ENCODE measurements at regions of chr22 and their contacts with region 1.

Region 1: GRCh38 chr22:49948958-49949913 is 11.3 kb upstream of the PIM3 start:
- DNase-seq: no peak
- ATAC-seq: no peak
- H3K4me3 ChIP-seq: no peak overlapping the region
- H3K4me3 Mint-ChIP-seq: no peak overlapping the region
- H3K27ac ChIP-seq: no peak overlapping the region
- H3K27ac Mint-ChIP-seq: peak overlapping the region in 1 of 9 donors; percentile 55
- H3K4me1 ChIP-seq: peaks cover 9 to 18% of the 10 kb centered on the region in 2 donors
- H3K4me1 Mint-ChIP-seq: peaks cover 5 to 18% (median 9%) of the 10 kb centered on the region in 7 donors
- H3K27me3 ChIP-seq: no peaks in the 10 kb centered on the region
- H3K27me3 Mint-ChIP-seq: no peaks in the 10 kb centered on the region

Region 2: DNA sequence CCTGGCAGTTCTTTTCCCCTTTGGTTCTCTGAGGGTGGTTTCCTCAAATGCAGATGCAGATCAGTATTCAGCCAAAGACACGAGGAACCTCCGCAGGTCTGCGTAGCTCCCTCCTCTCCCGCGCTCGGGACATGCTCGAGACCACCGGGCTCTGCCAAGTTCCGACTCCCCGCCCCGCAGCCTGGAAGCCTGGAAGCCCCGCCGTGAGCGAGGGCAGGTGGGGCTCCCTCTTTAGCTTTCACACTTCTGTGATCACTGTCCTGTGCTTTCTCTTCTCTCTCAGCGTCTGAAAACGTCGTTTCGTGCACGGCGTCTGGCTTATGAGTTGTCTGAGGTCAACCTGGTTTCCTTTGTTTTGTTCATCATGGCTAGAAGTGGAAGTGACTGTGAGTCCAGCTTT is 69.0 kb before region 1 on chr22:
- CTCF ChIA-PET with region 1: no interaction called
- POLR2A ChIA-PET with region 1: no interaction called
- intact Hi-C with region 1: no loop called
- DNase-seq: no peak
- ATAC-seq: peak; percentile 53
- H3K4me3 ChIP-seq: no peak overlapping the region
- H3K4me3 Mint-ChIP-seq: peak overlapping the region in 5 of 10 donors; percentile 7 to 61 (median 16)
- H3K27ac ChIP-seq: no peak overlapping the region
- H3K27ac Mint-ChIP-seq: peak overlapping the region in 7 of 9 donors; percentile 25 to 83 (median 57)
- H3K4me1 ChIP-seq: peaks cover 3 to 9% of the 10 kb centered on the region in 2 donors
- H3K4me1 Mint-ChIP-seq: peaks cover 23 to 57% (median 37%) of the 10 kb centered on the region in 7 donors
- H3K27me3 ChIP-seq: no peaks in the 10 kb centered on the region
- H3K27me3 Mint-ChIP-seq: no peaks in the 10 kb centered on the region

Region 3: DNA sequence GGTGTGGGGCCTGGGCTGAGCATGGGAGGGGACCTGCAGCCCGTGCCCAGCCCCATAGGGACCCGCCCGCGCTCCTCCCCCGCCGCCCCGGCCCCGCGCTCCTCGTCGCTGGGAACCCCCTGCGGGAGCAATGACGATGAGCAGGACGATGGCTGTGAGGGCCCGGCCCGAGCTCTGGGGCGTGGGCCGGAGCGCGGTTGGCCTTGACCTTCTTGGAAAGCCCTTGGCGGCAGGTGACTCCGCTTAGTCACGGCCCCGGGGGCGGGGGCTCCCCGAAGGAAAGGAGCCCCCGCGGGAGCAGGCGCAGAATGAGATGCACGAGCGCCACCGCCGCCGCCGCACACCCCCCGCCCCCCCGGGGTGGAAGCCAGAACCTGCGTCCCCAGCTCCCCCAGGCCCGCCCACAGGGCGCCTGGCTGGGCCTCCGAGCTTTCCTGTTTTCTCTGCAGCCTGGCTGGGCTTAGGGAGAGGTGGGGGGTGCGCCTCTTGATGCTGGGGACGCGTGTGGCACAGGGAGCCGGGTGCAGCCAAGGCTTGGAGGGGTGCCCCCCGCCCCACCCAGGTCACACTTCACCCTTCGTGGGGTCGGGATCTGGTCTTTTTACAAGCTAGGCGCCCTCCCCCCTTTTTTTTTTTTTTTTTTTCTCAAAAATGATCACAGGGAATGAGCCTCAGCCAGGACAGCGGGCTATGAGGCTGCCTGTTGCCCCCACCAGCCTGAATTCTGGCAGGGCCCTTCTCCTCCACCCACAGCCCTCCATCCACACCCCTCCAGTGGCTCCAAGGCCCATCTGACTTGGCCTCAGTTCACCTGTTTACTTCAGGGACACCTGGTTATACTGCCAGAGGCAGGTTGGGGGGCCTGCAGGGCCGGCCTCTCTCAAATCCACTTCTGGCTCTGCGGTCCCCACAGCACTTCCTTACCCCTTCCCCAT is 13.0 kb before region 1 on chr22:
- CTCF ChIA-PET with region 1: no interaction called
- POLR2A ChIA-PET with region 1: interaction called, 4 read pairs
- intact Hi-C with region 1: loop called (anchors 1 kb)
- DNase-seq: peak; percentile 85 to 98 (median 91)
- ATAC-seq: peak; percentile 84
- H3K4me3 ChIP-seq: peak overlapping the region; percentile 41
- H3K4me3 Mint-ChIP-seq: peak overlapping the region; percentile 56 to 76 (median 73)
- H3K27ac ChIP-seq: peak overlapping the region; percentile 99
- H3K27ac Mint-ChIP-seq: peak overlapping the region; percentile 78 to 94 (median 91)
- H3K4me1 ChIP-seq: peaks cover 12 to 18% of the 10 kb centered on the region in 2 donors
- H3K4me1 Mint-ChIP-seq: peaks cover 6 to 31% (median 23%) of the 10 kb centered on the region in 7 donors
- H3K27me3 ChIP-seq: no peaks in the 10 kb centered on the region
- H3K27me3 Mint-ChIP-seq: no peaks in the 10 kb centered on the region

Region 4: DNA sequence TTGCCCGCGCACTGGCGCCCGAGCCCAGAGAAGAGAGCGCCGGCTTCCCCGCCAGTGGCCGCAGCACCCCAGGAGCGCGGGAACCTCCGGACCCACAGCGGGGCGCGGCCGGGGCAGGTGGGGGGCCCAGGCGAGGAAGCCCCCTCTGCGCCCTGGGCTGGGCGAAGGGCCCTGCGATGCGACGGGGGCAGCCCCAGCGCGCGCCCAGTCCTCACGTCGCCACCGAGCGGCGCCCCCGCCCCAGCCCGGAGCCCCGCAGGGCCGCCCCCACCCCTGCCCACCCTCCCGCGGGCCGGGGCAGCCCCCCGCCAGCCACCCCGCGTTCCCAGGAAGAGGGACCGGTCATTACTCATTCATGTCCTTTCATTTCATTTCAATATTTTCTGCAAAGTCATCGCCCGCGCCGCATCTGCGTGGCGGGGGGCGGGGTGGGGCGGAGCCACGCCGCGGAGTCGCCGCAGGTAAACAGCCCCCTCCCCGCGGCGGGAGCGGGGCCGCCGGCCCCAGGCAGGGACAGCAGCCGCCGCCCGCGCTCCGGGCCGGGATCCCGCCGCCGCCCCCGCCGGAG is 220.6 kb after region 1 on chr22:
- CTCF ChIA-PET with region 1: no interaction called
- POLR2A ChIA-PET with region 1: no interaction called
- intact Hi-C with region 1: no loop called
- DNase-seq: peak in 2 of 9 donors; percentile 18 to 69
- ATAC-seq: peak; percentile 68
- H3K4me3 ChIP-seq: no peak overlapping the region
- H3K4me3 Mint-ChIP-seq: peak overlapping the region in 6 of 10 donors; percentile 39 to 63 (median 47)
- H3K27ac ChIP-seq: no peak overlapping the region
- H3K27ac Mint-ChIP-seq: no peak overlapping the region
- H3K4me1 ChIP-seq: no peaks in the 10 kb centered on the region
- H3K4me1 Mint-ChIP-seq: peaks cover 0 to 6% (median 2%) of the 10 kb centered on the region in 7 donors
- H3K27me3 ChIP-seq: peaks cover 0 to 4% of the 10 kb centered on the region in 2 donors
- H3K27me3 Mint-ChIP-seq: peaks cover 20 to 48% (median 39%) of the 10 kb centered on the region in 5 donors